ENCODE measurements at regions of chr16 and their contacts with region 1.

Region 1: GRCh38 chr16:88452482-88453216 is 431 bp upstream of the ZFPM1 start:
- DNase-seq: peak; percentile 98
- H3K4me3 Mint-ChIP-seq: peak overlapping the region; percentile 78
- H3K27ac Mint-ChIP-seq: peak overlapping the region; percentile 80
- H3K4me1 Mint-ChIP-seq: peaks cover 22% of the 10 kb centered on the region
- H3K27me3 Mint-ChIP-seq: no peaks in the 10 kb centered on the region

Region 2: DNA sequence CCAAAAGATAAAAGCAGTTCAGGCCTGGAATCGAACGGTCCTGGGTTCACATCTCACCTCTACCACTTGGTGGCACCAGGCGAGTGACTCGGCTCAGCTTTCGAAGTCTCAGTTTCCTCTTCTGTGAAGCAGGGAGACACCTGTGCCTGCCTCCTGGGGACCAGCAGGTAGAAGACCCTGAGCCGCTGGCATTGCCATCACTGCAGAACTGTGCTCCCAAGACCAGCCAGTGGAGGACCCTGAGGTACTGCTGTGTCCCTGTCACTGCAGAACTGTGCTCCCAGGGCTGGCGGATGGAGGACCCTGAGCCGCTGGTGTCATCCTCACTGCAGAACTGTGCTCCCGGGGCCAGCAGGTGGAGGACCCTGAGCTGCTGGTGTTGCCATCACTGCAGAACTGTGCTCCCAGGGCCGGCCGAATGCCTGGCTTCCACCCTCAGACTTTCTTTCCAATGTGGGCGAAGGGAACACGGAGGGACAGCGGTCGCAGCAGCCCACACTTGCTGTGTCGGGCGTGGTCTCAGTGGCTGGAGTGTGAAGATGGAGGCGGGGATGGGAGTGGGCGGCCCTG is 574.6 kb before region 1 on chr16:
- CTCF ChIA-PET with region 1: no interaction called
- intact Hi-C with region 1: loop called (anchors 5 kb)
- DNase-seq: peak; percentile 71
- H3K4me3 Mint-ChIP-seq: no peak overlapping the region
- H3K27ac Mint-ChIP-seq: no peak overlapping the region
- H3K4me1 Mint-ChIP-seq: peaks cover 47% of the 10 kb centered on the region
- H3K27me3 Mint-ChIP-seq: peaks cover 5% of the 10 kb centered on the region

Region 3: DNA sequence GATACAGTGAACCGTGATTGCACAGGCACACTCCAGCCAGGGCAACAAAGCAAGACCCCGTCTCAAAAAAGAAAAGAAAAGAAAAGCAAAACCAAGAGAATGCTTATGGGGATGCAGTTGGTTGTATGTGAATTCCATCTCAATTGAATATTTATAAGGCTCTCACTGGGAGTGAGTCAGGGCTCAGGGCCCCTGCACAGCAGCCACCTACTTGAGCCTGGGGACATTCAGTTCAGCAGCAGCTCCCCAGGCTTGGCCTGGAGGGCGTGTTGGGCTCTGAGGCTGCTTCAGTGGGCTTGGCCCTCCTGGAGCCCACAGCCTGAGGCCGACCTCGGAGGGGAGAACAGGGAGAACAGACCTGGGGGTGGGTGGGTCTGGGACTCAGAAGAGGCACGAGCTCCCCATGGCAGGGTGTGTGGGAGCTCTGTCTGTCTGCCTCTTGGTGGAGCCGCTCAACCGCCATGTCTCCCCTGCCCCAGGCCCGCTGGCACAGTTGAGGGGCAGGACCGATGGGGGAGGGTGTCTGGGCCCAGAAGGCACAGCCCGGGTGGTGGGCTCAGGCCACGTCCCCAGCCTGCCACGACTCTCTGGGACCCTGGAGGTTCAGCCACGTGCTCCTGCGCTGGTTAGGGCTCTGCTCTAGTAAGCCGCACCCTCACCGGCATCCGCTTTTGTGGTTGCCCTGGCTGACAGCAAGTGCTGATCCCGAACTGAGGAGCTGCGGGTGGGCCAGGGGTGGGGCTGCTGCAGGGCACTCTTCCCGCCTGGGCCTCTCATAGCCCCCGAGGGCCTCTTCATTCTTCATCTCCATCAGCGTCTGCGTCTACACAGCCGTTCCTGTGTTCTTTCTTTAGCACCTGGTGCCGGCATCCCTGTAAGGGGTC is 25.2 kb after region 1 on chr16:
- CTCF ChIA-PET with region 1: no interaction called
- intact Hi-C with region 1: loop called (anchors 1 kb)
- DNase-seq: peak; percentile 72
- H3K4me3 Mint-ChIP-seq: no peak overlapping the region
- H3K27ac Mint-ChIP-seq: no peak overlapping the region
- H3K4me1 Mint-ChIP-seq: peaks cover 41% of the 10 kb centered on the region
- H3K27me3 Mint-ChIP-seq: no peaks in the 10 kb centered on the region

Region 4: GRCh38 chr16:88497561-88498462 is 45.2 kb after region 1 on chr16:
- CTCF ChIA-PET with region 1: no interaction called
- intact Hi-C with region 1: no loop called
- DNase-seq: no peak
- H3K4me3 Mint-ChIP-seq: no peak overlapping the region
- H3K27ac Mint-ChIP-seq: no peak overlapping the region
- H3K4me1 Mint-ChIP-seq: no peaks in the 10 kb centered on the region
- H3K27me3 Mint-ChIP-seq: no peaks in the 10 kb centered on the region

Region 5: DNA sequence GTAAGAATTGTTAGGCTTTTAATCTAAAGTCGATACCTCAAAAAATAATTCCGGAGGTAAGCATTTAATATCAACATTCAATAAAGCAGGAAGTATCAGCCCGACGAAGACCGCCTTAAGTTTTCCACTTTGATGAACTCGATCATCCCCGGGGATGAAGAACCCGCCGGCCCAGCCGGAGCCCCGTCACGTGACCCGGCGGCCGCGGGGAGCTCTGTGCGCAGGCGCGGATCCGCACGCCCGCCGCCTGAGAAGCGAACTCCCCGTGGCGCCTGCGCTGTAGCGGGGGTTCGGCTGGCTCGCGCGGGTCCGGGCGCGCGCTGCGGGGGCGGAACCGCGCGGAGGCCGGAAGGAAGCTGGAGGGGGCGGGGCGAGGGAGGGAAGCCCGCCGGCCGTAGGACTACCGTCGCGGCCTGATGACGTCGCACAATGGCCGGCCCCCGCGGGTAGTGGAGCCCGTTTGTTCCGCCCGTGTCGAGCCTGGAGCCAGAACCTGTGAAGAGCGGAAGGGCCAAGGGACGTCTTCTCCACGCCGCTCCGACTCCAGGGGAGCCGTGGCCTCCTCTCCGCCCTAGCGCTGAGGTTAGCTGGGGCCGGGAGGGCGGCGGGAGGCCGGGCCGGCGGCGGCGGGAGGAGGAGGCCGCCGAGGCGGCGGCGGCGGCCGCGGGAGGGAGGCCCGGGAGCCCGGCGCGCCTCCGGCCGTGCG is 117.5 kb after region 1 on chr16 and contains the start of gene ZC3H18:
- CTCF ChIA-PET with region 1: no interaction called
- intact Hi-C with region 1: loop called (anchors 1 kb)
- DNase-seq: peak; percentile 97
- H3K4me3 Mint-ChIP-seq: peak within 1 kb of the TSS; percentile 81
- H3K27ac Mint-ChIP-seq: peak within 1 kb of the TSS; percentile 84
- H3K4me1 Mint-ChIP-seq: peaks cover 41% of the 10 kb centered on the region
- H3K27me3 Mint-ChIP-seq: no peaks in the 10 kb centered on the region
- total RNA-seq, gene ZC3H18: 55.8 to 58.5 TPM

Region 6: GRCh38 chr16:88785106-88785924 is 332.7 kb after region 1 on chr16 and contains the start of gene PIEZO1:
- CTCF ChIA-PET with region 1: no interaction called
- intact Hi-C with region 1: loop called (anchors 1 kb)
- DNase-seq: peak; percentile 77
- H3K4me3 Mint-ChIP-seq: peak within 1 kb of the TSS; percentile 65
- H3K27ac Mint-ChIP-seq: peak within 1 kb of the TSS; percentile 78
- H3K4me1 Mint-ChIP-seq: peaks cover 42% of the 10 kb centered on the region
- H3K27me3 Mint-ChIP-seq: no peaks in the 10 kb centered on the region
- total RNA-seq, gene PIEZO1: 78.2 to 80.1 TPM